ENCODE measurements at regions of chr1 and their contacts with region 1.

Region 1: DNA sequence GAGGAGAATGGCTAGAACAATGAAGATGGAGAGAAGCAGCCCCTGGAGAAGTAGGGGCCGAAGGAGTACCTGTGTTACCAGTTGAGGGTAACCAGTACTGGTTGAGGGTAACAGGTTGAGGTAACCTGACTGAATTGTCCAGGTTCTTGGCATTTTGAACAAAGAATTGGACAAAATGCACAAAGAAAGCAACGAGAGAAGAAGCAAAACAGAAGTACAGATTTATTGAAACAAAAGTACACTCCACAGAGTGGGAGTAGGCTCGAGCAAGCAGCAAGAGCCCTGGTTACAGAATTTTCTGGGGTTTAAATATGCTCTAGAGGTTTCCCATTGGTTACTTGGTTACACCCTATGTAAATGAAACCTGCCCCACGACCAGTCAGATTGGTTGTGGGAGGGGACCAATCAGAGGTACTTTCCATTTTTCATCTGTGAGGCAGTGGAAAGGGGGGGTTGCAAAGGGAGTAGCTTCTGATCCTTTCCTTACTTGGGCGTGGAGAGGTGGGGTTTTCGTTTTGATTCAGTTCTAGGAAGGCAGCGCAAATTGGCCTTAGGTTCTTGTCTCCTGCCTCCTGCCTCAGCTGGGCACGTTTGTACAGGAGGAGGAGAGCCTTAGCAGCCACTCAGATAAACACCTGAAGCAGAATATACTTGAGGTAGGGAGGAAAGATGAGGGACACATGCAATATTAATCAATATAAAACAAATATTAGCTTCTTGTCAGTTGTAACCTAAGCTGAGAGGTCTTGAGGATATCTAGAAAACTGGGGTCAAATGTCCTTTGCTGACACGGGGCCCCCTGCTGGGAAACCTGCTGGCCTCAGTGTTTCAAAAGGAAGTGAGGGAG is 14.2 kb upstream of the LSM10 start:
- DNase-seq: no peak
- ATAC-seq: peak in 1 of 8 donors; percentile 54
- H3K4me3 ChIP-seq: no peak overlapping the region
- H3K27ac ChIP-seq: no peak overlapping the region
- H3K4me1 ChIP-seq: no peaks in the 10 kb centered on the region
- H3K27me3 ChIP-seq: no peaks in the 10 kb centered on the region
- CTCF ChIP-seq: no peak

Region 2: DNA sequence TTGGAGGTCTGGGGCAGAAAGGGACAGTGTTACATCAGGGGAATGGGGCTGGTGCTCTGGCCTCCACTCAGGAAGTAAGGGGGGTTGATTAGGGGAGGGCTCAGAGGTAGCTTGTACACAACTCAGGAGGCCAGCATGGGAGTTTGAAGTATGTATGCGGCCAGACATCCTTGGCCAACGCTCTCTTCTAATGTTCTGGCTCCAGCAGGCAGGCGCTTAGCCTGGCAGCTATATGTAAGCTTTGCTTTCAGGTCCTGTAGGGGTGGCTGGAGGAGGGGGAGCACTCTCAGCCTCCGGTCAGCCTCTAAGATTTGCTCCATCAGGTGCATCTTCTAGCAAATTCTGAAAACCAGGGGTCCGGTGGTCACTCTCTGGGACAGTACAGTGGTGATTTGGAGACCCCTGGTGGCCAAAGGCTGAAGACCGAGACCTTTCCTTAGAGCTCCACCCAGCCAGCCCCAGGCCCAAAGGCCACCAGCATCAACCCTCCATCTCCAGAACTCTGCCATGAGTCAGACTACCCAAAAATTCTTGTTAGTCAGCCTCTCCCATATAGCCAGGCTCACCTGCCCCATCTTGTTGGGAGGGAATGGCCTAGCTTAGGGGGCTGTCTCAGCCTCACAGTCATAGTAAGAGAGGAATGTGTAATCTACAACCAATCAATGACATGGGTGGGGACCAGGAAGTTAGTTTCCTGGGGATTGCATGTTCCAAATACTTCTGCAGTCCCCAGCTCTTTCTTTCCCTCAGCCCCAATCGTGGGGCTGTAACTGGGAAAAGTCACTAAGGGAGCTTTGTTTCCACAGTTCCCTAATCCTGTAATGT is 277.2 kb before region 1 on chr1:
- intact Hi-C with region 1: loop called in 1 of 10 experiments (anchors 10 kb)
- DNase-seq: peak in 1 of 2 donors; percentile 46
- ATAC-seq: peak; percentile 24 to 78 (median 62)
- H3K4me3 ChIP-seq: no peak overlapping the region
- H3K27ac ChIP-seq: peak overlapping the region in 7 of 10 donors; percentile 41 to 84 (median 73)
- H3K4me1 ChIP-seq: peaks cover 6 to 54% (median 41%) of the 10 kb centered on the region in 9 donors
- H3K27me3 ChIP-seq: no peaks in the 10 kb centered on the region
- CTCF ChIP-seq: peak; percentile 27 to 76 (median 69)

Region 3: GRCh38 chr1:36306902-36307456 is 104.9 kb before region 1 on chr1:
- intact Hi-C with region 1: loop called in 2 of 10 experiments (anchors 10 kb)
- DNase-seq: peak; percentile 91 to 93
- ATAC-seq: peak; percentile 97 to 99 (median 98)
- H3K4me3 ChIP-seq: peak overlapping the region; percentile 65 to 98 (median 84)
- H3K27ac ChIP-seq: peak overlapping the region; percentile 48 to 91 (median 80)
- H3K4me1 ChIP-seq: peaks cover 4 to 33% (median 18%) of the 10 kb centered on the region in 9 donors
- H3K27me3 ChIP-seq: no peaks in the 10 kb centered on the region
- CTCF ChIP-seq: no peak

Region 4: GRCh38 chr1:36603461-36603860 is 191.6 kb after region 1 on chr1:
- intact Hi-C with region 1: no loop called
- DNase-seq: no peak
- ATAC-seq: no peak
- H3K4me3 ChIP-seq: no peak overlapping the region
- H3K27ac ChIP-seq: no peak overlapping the region
- H3K4me1 ChIP-seq: no peaks in the 10 kb centered on the region
- H3K27me3 ChIP-seq: peaks cover 0 to 39% (median 22%) of the 10 kb centered on the region in 7 donors
- CTCF ChIP-seq: no peak